ENCODE measurements at regions of chr1 and their contacts with region 1.

Region 1: GRCh38 chr1:16351994-16352841 is at the start of gene FBXO42:
- DNase-seq: peak; percentile 70 to 94
- H3K4me3 ChIP-seq: peak within 1 kb of the TSS; percentile 74 to 92 (median 82)
- H3K27ac ChIP-seq: peak within 1 kb of the TSS; percentile 79; the same call in 1 of the 2 replicates
- H3K4me1 ChIP-seq: peaks cover 2 to 4% (median 3%) of the 10 kb centered on the region in 4 experiments; a peak in 3 of 7 replicates
- H3K27me3 ChIP-seq: no peaks in the 10 kb centered on the region; a peak in 1 of 7 replicates
- CTCF ChIP-seq: peak; percentile 31 to 60 (median 48)
- EP300 ChIP-seq: peak in 1 of 2 experiments; percentile 16; a peak in 1 of 3 replicates
- POLR2A ChIP-seq: peak; percentile 66 to 72
- RAD21 ChIP-seq: peak in 1 of 2 experiments; percentile 33; a peak in 1 of 4 replicates
- total RNA-seq, gene FBXO42: 17.0 and 17.4 TPM in 2 replicates

Region 2: GRCh38 chr1:16260814-16261213 is 91.4 kb before region 1 on chr1:
- CTCF ChIA-PET with region 1: no interaction called
- POLR2A ChIA-PET with region 1: no interaction called
- DNase-seq: no peak
- H3K4me3 ChIP-seq: no peak overlapping the region
- H3K27ac ChIP-seq: no peak overlapping the region
- H3K4me1 ChIP-seq: no peaks in the 10 kb centered on the region; a peak in 1 of 7 replicates
- H3K27me3 ChIP-seq: no peaks in the 10 kb centered on the region
- CTCF ChIP-seq: no peak
- EP300 ChIP-seq: no peak
- POLR2A ChIP-seq: no peak
- RAD21 ChIP-seq: no peak

Region 3: DNA sequence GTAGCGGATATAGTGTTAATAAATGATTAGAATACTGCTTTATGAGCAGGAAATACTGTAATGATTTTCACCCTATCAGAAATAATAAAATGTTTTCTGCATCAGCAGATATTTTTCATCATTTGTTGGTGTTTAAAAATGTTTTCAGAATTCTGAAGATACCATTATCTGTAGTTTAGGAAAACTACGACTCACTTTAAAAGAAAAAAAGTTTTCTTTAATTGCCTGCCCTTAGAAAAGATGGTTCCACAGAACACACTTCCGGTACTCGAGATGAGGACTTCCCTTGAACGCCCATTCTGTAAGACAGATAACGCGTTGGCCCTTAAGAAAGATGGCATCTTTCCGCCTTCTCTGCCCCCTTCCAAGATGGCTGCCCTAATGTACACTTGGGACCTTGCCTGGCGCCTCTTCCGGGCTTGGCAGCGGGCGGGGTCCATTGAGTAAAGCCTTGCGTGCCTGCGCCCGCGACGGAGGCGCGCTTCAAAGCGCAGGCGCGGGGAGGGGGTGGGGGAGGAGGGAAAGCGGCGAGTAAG is 14.6 kb after region 1 on chr1 and contains the start of gene SZRD1:
- CTCF ChIA-PET with region 1: interaction called, 44 read pairs
- POLR2A ChIA-PET with region 1: interaction called, 32 read pairs
- DNase-seq: peak; percentile 82 to 97
- H3K4me3 ChIP-seq: peak within 1 kb of the TSS; percentile 72 to 91 (median 80)
- H3K27ac ChIP-seq: peak within 1 kb of the TSS; percentile 88
- H3K4me1 ChIP-seq: peaks cover 0 to 3% (median 1%) of the 10 kb centered on the region in 4 experiments; a peak in 2 of 7 replicates
- H3K27me3 ChIP-seq: no peaks in the 10 kb centered on the region
- CTCF ChIP-seq: no peak
- EP300 ChIP-seq: 0 out of 3 replicates have a peak, but pooled peaks of 1 of the 2 experiments have one; percentile 53
- POLR2A ChIP-seq: no peak
- RAD21 ChIP-seq: no peak
- total RNA-seq, gene SZRD1: 108 and 116 TPM in 2 replicates